ENCODE measurements at regions of chr6 and their contacts with region 1.

Region 1: GRCh38 chr6:127539272-127539671 is 20.1 kb upstream of the MTCL3 start:
- DNase-seq: no peak
- H3K4me3 Mint-ChIP-seq: no peak overlapping the region
- H3K27ac Mint-ChIP-seq: no peak overlapping the region
- H3K4me1 Mint-ChIP-seq: peaks cover 7% of the 10 kb centered on the region
- H3K27me3 Mint-ChIP-seq: peaks cover 23% of the 10 kb centered on the region

Region 2: DNA sequence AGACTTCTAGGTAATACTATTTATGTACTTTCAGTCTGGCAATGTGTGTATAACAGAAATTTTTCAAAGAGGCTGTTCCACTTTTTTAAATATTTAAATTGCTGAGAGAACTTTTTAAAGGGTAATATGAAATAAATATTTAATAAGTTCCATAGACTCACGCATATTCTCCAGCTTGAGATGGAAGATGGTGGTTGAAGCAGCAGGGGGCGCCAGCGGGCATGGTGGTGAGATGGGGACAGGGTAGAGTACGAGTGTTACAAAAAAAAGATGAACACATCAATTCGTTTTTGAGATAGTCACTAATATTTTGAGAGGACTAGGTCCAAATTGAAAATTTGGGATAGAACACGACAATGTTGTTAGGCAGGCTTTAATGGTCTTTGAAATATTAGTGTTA is 352.4 kb before region 1 on chr6:
- CTCF ChIA-PET with region 1: interaction called, 15 read pairs
- DNase-seq: peak; percentile 71
- H3K4me3 Mint-ChIP-seq: no peak overlapping the region
- H3K27ac Mint-ChIP-seq: no peak overlapping the region
- H3K4me1 Mint-ChIP-seq: no peaks in the 10 kb centered on the region
- H3K27me3 Mint-ChIP-seq: no peaks in the 10 kb centered on the region

Region 3: DNA sequence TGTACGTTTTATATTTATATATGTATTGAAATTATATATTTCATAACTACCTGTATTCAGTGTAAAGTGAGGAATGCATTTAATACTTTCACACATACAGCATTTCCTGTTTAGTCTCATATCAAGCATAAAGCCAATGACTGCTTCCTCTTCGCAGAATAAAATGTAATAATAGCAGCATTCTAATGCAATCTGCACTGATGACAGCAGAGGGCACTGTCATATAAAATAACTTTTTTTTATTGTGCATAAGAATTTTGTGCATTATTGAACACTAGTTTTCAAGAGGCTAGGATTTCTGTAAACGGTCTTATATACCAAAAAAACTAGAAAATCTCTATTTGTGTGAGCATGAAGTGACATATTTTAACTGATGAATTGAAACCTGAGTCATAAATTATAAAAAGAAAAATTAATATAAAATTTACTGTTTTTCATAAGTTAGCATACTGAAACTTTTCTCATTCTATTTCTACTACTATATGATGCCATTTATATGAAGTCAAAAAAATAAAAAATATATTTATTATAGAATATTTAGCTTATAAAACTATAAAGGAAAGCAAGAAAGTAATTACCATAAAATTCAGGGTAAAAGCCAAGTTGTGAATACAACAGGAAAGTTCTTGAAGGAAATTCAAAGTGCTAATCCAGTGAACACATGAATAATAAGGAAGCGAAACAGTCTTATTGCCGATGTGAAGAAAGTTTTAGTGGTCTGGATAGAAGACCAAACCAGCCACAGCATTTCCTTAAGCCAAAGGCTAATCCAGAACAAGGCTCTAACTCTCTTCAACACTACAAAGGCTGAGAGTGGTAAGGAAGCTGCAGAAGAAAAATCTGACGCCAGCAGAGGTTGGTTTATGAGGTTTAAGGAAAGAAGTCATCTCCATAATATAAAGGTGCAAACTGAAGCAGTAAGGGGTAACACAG is 236.3 kb before region 1 on chr6:
- CTCF ChIA-PET with region 1: interaction called, 26 read pairs
- DNase-seq: peak; percentile 61
- H3K4me3 Mint-ChIP-seq: no peak overlapping the region
- H3K27ac Mint-ChIP-seq: no peak overlapping the region
- H3K4me1 Mint-ChIP-seq: peaks cover 6% of the 10 kb centered on the region
- H3K27me3 Mint-ChIP-seq: no peaks in the 10 kb centered on the region

Region 4: GRCh38 chr6:127420556-127420955 is 118.7 kb before region 1 on chr6:
- CTCF ChIA-PET with region 1: interaction called, 12 read pairs
- DNase-seq: peak; percentile 79
- H3K4me3 Mint-ChIP-seq: no peak overlapping the region
- H3K27ac Mint-ChIP-seq: no peak overlapping the region
- H3K4me1 Mint-ChIP-seq: peaks cover 11% of the 10 kb centered on the region
- H3K27me3 Mint-ChIP-seq: no peaks in the 10 kb centered on the region

Region 5: DNA sequence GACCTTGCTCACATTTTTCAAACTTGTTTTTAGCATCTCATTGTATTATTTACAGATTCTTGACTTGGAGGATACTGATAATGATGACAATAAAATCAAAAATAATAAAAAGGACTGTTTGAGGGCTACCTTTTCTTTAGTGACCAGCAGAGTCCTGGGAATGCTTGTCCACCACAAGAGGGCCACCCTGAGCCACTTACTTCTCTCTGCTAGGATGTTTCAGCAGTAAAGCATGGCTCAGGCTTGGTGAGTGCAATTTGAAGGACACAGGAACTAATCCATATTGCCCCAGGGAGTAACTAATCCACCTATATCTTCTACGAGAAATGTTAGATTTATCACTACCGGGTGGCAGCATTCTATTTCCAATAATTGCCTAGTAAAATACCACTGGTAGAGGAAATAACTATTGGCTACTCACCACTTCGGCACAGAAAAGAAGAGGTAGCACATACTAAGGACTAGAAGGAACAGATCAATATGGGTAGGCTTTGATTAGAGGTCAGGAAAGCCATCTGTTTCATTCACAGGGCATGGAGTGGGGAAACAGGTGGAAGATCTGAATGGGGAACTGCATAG is 74.3 kb before region 1 on chr6:
- CTCF ChIA-PET with region 1: interaction called, 43 read pairs
- DNase-seq: peak; percentile 77
- H3K4me3 Mint-ChIP-seq: no peak overlapping the region
- H3K27ac Mint-ChIP-seq: no peak overlapping the region
- H3K4me1 Mint-ChIP-seq: peaks cover 13% of the 10 kb centered on the region
- H3K27me3 Mint-ChIP-seq: no peaks in the 10 kb centered on the region